Left colon (tissue), 2 donors: ENCODE measurements at regions of chr1 and their contacts with region 1.

Region 1: DNA sequence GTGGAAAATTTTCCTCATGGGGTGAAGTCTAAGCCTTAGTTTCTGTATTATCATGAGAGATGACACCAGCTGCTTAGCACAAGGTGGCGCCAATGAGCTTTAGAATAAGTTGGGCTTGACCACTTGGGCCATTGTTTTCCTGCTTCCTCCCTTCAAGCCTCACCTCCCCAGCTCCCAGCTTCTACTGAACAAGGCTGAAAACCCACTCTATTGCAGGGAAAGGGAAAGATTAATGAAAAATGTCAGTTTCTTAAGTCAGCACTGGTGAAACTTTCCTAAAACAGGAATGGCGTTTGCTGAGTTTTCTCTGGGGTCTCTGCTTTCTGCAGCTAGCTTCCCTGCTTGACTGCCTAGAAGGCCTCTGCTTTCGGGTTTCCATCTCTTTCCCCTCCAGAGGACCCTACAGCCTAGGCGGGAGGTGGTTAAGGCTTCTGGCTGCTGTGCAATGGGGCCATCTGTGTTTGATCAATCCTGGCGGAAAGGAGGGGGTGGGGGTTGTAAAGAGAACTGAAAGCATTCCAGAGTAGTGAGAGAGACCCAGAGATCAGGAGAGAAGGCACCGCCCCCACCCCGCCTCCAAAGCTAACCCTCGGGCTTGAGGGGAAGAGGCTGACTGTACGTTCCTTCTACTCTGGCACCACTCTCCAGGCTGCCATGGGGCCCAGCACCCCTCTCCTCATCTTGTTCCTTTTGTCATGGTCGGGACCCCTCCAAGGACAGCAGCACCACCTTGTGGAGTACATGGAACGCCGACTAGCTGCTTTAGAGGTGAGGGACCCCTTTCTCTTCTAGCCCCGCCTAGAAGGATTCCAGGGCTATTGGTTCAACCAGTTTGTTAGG is at the start of gene OLFML3:
- DNase-seq: peak; percentile 81 to 90
- ATAC-seq: peak; percentile 82
- total RNA-seq, gene OLFML3: 4.1 to 23.5 TPM

Region 2: GRCh38 chr1:113928941-113929749 is 49.9 kb before region 1 on chr1 and contains the start of gene HIPK1:
- intact Hi-C with region 1: no loop called
- DNase-seq: peak; percentile 93 to 96
- ATAC-seq: peak; percentile 83
- total RNA-seq, gene HIPK1: 67.4 to 68.2 TPM

Region 3: GRCh38 chr1:114126261-114127095 is 147.4 kb after region 1 on chr1:
- intact Hi-C with region 1: no loop called
- DNase-seq: no peak
- ATAC-seq: no peak

Region 4: DNA sequence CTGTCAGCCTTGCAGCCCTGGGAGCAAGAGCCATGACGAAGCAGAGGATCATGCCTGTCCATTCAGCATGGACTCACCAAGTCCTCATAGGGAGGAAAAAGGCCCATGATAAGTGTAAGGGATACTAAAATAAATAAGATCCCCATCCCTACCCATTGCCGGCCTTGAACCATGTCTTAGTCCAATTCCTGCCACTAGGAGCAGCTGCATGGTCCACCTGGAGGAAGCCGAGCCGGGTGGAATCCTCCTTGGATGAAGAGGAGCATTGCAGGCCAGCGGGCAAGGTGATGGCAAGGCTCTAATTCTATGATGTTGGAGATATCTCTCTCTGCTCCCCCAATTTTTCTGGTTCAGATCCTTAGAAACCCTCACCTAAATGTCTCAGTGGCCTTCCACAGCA is 213.2 kb after region 1 on chr1:
- intact Hi-C with region 1: no loop called
- DNase-seq: no peak
- ATAC-seq: no peak

Region 5: DNA sequence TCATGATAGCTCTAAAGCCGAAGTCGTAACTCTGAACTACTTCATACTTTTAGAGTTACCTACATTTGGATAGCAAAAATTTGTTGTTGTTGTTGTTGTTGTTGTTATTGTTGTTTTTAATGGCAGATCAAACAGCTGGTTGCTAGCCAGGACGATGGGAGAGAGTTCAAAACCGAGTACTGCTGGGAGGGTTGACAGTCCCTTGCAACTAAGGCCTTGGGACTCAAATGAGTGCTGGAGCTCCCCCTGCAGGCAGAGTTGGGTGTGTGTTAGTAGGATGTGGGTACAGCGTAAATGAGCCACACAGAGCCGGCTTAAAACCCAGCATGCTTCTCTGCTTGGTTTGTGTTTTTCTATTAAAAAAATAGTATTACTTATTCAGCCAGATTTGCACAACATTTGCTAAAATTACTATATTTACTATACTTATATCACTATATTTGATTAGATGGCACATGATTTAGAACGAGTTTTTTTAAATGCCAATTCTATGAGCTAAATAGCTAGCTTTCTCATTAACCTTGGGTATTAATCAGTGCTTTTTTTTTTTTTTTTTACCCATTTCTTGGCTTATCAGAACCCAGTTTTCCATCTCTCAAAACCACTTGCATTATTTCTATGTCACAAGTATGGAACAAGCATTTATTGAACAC is 303.8 kb after region 1 on chr1:
- intact Hi-C with region 1: loop called in 1 of 2 experiments (anchors 2 kb)
- DNase-seq: peak; percentile 78 to 93
- ATAC-seq: peak; percentile 99

Region 6: DNA sequence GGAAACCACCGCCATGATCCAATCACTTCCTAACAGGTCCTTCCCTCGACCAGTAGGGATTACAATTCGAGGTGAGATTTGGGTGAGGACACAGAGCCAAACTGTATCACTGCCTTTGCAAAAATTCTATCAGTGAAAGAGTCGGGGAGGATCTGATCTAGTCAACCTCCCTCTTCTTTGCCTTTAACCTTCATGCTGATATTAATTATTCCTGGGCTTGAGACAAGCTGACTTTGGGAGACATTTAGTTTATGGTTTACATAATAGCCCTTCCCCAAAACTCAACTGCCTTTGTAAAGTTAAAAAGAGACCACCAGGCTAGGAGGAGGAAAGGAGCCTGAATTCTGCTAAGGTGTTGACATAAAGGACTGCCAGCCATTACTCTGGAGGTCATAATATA is 439.2 kb after region 1 on chr1:
- intact Hi-C with region 1: loop called in 1 of 2 experiments (anchors 10 kb)
- DNase-seq: no peak
- ATAC-seq: no peak